Caco-2 (cell line): ENCODE measurements at regions of chr16 and their contacts with region 1.

Region 1: GRCh38 chr16:9008601-9009260 is 45.0 kb upstream of the USP7 start:
- DNase-seq: peak; percentile 80 to 84
- H3K4me3 ChIP-seq: no peak overlapping the region
- H3K4me3 Mint-ChIP-seq: peak overlapping the region; percentile 48
- H3K27ac Mint-ChIP-seq: no peak overlapping the region
- H3K4me1 ChIP-seq: no peaks in the 10 kb centered on the region
- H3K4me1 Mint-ChIP-seq: no peaks in the 10 kb centered on the region
- H3K27me3 ChIP-seq: no peaks in the 10 kb centered on the region
- H3K27me3 Mint-ChIP-seq: no peaks in the 10 kb centered on the region
- CTCF ChIP-seq: peak; percentile 81 to 96

Region 2: GRCh38 chr16:8720080-8720966 is 288.4 kb before region 1 on chr16:
- CTCF ChIA-PET with region 1: no interaction called
- POLR2A ChIA-PET with region 1: no interaction called
- intact Hi-C with region 1: no loop called
- DNase-seq: peak; percentile 14 to 40
- H3K4me3 ChIP-seq: no peak overlapping the region
- H3K4me3 Mint-ChIP-seq: no peak overlapping the region
- H3K27ac Mint-ChIP-seq: no peak overlapping the region
- H3K4me1 ChIP-seq: peaks cover 3% of the 10 kb centered on the region; the same call in 1 of the 2 replicates
- H3K4me1 Mint-ChIP-seq: no peaks in the 10 kb centered on the region
- H3K27me3 ChIP-seq: no peaks in the 10 kb centered on the region
- H3K27me3 Mint-ChIP-seq: no peaks in the 10 kb centered on the region
- CTCF ChIP-seq: no peak

Region 3: GRCh38 chr16:8905168-8905762 is 103.5 kb before region 1 on chr16:
- CTCF ChIA-PET with region 1: interaction called, 13 read pairs
- POLR2A ChIA-PET with region 1: no interaction called
- intact Hi-C with region 1: loop called (anchors 1 kb)
- DNase-seq: peak in 1 of 2 experiments; percentile 42
- H3K4me3 ChIP-seq: no peak overlapping the region
- H3K4me3 Mint-ChIP-seq: no peak overlapping the region
- H3K27ac Mint-ChIP-seq: peak overlapping the region; percentile 22
- H3K4me1 ChIP-seq: peaks cover 10% of the 10 kb centered on the region
- H3K4me1 Mint-ChIP-seq: peaks cover 13% of the 10 kb centered on the region
- H3K27me3 ChIP-seq: no peaks in the 10 kb centered on the region
- H3K27me3 Mint-ChIP-seq: no peaks in the 10 kb centered on the region
- CTCF ChIP-seq: peak; percentile 35 to 64

Region 4: GRCh38 chr16:8936421-8936820 is 72.3 kb before region 1 on chr16:
- CTCF ChIA-PET with region 1: interaction called, 76 read pairs
- POLR2A ChIA-PET with region 1: no interaction called
- intact Hi-C with region 1: loop called (anchors 10 kb)
- DNase-seq: peak; percentile 63 to 72
- H3K4me3 ChIP-seq: no peak overlapping the region
- H3K4me3 Mint-ChIP-seq: no peak overlapping the region
- H3K27ac Mint-ChIP-seq: no peak overlapping the region
- H3K4me1 ChIP-seq: 0 out of 2 replicates have a peak, but pooled peaks cover 5% of the 10 kb centered on the region
- H3K4me1 Mint-ChIP-seq: peaks cover 29% of the 10 kb centered on the region
- H3K27me3 ChIP-seq: no peaks in the 10 kb centered on the region
- H3K27me3 Mint-ChIP-seq: no peaks in the 10 kb centered on the region
- CTCF ChIP-seq: peak; percentile 67 to 86

Region 5: DNA sequence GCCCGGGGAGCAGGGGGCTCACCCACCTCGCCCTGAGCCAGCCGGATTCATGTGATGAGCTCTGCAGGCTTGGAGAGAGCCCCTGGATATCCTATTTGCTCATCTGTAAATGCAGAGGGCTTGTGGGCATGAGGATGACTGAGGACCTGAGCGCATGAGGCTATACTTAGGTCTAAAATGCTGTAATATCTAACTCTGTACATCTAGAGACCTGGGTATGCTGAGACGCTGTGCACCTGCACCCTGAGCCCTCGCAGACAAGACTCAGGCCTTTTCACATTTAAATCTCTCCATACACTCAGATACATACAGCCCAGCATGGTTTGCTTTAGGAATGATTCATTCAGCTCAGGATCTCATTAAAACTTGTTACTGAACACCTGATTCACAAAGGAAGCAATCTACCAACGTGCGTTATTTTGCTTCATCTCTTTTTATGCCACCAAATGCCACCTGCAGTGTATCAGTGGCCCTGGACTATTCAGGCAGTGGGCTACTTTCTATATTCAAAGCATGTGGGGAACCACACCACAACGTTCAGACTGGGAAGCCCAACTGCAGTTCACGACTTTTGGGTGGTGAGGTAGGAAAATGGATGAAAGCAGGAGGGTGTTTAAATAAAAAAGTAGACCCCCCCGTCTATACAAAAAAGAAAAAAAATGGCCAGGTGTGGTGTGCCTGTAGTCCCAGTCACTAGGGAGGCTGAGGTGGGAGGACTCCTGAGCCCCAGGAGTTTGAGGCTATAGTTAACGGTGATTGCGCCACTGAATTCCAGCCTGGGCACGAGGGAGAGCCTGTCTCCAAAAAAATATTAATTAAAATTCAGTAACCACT is 57.1 kb before region 1 on chr16:
- CTCF ChIA-PET with region 1: interaction called, 11 read pairs
- POLR2A ChIA-PET with region 1: no interaction called
- intact Hi-C with region 1: no loop called
- DNase-seq: no peak
- H3K4me3 ChIP-seq: no peak overlapping the region
- H3K4me3 Mint-ChIP-seq: no peak overlapping the region
- H3K27ac Mint-ChIP-seq: no peak overlapping the region
- H3K4me1 ChIP-seq: peaks cover 9% of the 10 kb centered on the region; the same call in 1 of the 2 replicates
- H3K4me1 Mint-ChIP-seq: peaks cover 20% of the 10 kb centered on the region
- H3K27me3 ChIP-seq: no peaks in the 10 kb centered on the region
- H3K27me3 Mint-ChIP-seq: no peaks in the 10 kb centered on the region
- CTCF ChIP-seq: no peak

Region 6: GRCh38 chr16:8963825-8964441 is 44.8 kb before region 1 on chr16 and contains the start of gene USP7:
- CTCF ChIA-PET with region 1: interaction called, 14 read pairs
- POLR2A ChIA-PET with region 1: no interaction called
- intact Hi-C with region 1: loop called (anchors 2 kb)
- DNase-seq: peak; percentile 87 to 93
- H3K4me3 ChIP-seq: peak within 1 kb of the TSS; percentile 83
- H3K4me3 Mint-ChIP-seq: peak within 1 kb of the TSS; percentile 92
- H3K27ac Mint-ChIP-seq: peak within 1 kb of the TSS; percentile 68
- H3K4me1 ChIP-seq: peaks cover 15% of the 10 kb centered on the region
- H3K4me1 Mint-ChIP-seq: peaks cover 26% of the 10 kb centered on the region
- H3K27me3 ChIP-seq: no peaks in the 10 kb centered on the region
- H3K27me3 Mint-ChIP-seq: no peaks in the 10 kb centered on the region
- CTCF ChIP-seq: no peak
- total RNA-seq, gene USP7: 139 and 148 TPM in 2 replicates

Region 7: DNA sequence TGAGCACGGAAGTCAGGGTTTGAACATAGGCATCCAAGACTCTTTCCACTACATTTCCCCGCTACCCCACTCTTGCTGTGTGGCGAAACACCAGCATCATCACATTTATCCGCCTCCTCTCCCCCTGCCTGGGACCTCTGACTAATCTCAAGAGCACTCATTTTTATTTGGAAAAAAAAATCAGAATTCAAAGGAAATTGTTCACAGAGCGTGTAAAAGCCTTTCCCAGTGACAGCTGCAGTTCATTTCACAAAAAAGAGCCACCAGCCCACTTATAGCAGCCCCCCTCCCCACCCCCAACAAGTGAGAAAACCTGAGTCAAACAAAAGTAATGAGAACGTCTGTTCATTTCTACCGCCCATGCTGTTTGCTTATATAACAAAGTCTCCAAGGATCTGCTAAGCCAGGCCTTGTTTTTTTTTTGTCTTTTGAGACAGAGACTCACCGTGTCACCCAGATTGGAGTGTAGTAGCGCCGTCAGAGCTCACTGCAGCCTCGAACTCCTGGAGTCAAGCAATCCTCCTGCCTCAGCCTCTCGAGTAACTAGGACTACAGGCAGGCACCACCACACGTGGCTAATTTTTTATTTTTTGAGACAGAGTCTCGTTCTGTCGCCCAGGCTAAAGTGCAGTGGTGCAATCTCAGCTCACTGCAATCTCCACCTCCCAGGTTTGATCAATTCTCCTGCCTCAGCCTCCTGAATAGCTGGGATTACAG is 34.4 kb after region 1 on chr16:
- CTCF ChIA-PET with region 1: interaction called, 10 read pairs
- POLR2A ChIA-PET with region 1: no interaction called
- intact Hi-C with region 1: no loop called
- DNase-seq: no peak
- H3K4me3 ChIP-seq: no peak overlapping the region
- H3K4me3 Mint-ChIP-seq: no peak overlapping the region
- H3K27ac Mint-ChIP-seq: no peak overlapping the region
- H3K4me1 ChIP-seq: peaks cover 8% of the 10 kb centered on the region; the same call in 1 of the 2 replicates
- H3K4me1 Mint-ChIP-seq: peaks cover 10% of the 10 kb centered on the region
- H3K27me3 ChIP-seq: no peaks in the 10 kb centered on the region
- H3K27me3 Mint-ChIP-seq: no peaks in the 10 kb centered on the region
- CTCF ChIP-seq: no peak